Colonic mucosa (tissue), 4 donors: ENCODE measurements at regions of chr17 and their contacts with region 1.

Region 1: DNA sequence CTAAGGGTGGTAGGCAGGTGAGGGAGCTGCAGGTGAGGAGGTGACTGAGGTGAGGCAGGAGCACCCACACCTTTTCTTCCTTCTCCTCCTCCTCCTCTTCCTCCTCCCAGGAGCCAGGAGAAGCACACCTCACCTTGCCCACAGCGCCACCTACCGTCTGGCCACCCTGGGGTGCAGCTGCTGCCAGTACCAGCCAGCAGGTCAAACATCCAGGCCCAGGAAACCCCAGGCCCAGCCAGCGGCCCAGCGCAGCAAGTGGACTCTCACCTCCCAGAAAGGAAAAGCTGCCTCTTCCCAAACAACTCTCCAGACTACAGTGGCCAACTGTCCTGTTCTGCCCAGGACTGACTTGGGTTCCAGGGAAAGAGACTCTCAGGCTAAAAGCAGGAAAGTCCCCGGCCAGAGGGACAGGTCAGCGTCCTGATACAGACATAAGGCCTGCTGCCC is 22.7 kb downstream of the PEMT start:
- DNase-seq: peak; percentile 90
- H3K4me3 ChIP-seq: no peak overlapping the region
- H3K27ac ChIP-seq: no peak overlapping the region
- H3K4me1 ChIP-seq: peaks cover 11% of the 10 kb centered on the region
- H3K27me3 ChIP-seq: no peaks in the 10 kb centered on the region
- CTCF ChIP-seq: peak; percentile 68

Region 2: DNA sequence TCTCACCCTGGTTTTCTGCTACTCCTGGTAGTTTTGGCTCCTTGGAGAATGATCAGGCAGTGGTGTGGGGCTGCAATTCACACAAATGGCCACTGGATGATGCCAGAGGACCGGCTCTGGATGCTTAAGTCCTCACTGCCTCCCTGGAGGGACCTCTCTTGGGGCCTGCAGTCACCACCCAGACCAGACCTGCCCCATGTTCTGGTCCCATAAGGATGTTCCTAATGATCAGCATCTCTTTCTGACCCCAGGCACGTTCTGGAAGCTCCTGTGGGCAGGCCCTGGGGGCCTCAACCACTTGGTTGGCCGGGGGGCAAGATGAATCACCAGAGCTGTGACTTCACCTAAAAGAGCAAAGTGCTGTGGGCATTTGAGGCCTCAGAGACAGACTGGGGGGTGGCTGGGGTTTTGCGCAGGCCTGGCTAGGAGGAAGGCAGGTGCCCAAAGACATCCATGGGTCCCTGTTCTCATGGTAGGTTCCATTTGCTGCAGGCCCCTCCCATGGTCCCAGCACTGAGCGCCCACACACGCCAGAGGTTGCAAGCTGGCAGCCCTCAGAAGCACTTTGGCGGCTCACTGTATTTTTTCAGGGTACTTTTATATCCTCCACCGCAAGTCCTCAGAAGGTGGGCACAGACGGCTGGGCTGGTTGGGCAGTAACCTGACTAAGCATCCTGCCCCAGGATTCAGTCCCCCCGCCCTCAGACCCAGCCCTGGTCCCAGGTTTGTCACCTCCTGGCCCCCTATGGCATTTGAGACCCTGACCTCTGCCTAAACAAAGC is 212.4 kb before region 1 on chr17:
- intact Hi-C with region 1: loop called (anchors 2 kb)
- DNase-seq: peak; percentile 76
- H3K4me3 ChIP-seq: no peak overlapping the region
- H3K27ac ChIP-seq: no peak overlapping the region
- H3K4me1 ChIP-seq: no peaks in the 10 kb centered on the region
- H3K27me3 ChIP-seq: no peaks in the 10 kb centered on the region
- CTCF ChIP-seq: peak; percentile 99

Region 3: DNA sequence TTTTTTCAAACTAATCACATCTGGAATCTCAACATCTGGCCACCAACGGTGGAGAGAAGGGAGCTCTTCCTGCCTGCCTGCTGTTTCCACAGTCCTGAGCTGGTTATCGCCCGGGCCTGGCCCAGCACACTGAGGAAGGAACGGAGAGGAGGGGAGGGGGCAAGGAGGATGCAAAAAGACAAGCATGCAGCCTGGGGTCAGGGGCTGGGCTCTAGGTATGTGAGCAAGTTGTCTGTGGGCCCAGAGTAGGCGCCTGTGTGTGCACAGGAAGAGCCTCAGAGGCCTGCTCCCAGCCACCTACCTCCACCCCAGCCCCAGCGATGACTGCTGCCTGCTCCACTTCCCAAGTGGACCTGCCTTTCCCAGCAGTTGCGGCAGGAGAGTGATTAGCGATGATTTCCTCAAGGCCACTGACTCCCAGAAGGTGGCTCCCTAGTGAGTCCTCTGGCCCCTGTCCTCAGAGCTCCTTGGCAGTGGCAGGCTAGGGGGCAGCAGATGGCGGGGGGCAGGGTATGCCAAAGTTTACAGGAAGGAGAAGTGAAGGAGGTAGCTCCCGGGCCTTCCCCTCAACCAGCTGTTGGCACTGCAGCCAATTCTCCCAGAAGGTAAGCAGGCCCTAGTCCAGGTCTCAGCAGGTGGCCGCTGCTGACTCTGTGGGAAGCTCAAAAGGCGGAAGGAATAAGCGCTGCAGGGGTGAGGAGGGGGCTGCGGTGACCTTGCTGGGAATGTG is 45.6 kb before region 1 on chr17:
- intact Hi-C with region 1: no loop called
- DNase-seq: no peak
- H3K4me3 ChIP-seq: no peak overlapping the region
- H3K27ac ChIP-seq: no peak overlapping the region
- H3K4me1 ChIP-seq: no peaks in the 10 kb centered on the region
- H3K27me3 ChIP-seq: no peaks in the 10 kb centered on the region
- CTCF ChIP-seq: no peak

Region 4: DNA sequence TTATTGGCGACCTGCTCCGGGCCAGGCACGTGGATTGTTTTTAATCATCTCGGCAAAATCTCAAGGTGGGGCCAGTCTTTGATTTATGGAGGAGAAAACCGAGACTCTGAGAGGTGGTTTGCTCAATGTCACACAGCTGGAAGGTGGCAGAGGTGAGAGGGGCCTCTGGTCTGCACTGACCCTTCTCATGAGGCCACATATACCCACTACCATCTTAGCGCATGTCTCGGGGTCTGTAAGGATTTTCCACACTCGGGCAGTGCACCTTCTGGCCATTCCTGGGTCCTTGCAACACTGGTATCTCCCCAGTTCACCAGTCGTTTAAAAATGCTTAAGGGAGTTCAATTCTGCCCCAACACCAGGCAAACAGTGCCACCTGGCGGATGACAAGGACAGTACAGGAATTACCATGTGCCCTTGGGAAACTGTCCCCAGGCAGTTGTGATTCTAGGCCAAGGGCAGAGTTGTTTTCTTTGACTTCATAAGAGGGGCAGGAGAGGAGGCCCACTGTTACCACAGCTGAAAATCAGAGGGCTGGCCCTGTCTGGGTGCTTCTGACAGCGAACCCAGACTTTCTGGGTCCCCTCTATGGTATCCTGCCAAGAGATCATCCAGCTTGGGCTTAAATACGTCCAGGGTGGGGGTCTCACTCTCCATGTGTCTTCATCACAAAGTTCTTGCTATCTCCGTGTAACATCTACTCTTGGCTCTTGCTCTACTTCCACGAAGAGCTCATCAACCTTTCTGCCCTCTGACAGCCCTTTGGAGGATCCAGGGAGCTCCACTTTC is 73.0 kb after region 1 on chr17:
- intact Hi-C with region 1: loop called (anchors 10 kb)
- DNase-seq: peak; percentile 83
- H3K4me3 ChIP-seq: no peak overlapping the region
- H3K27ac ChIP-seq: no peak overlapping the region
- H3K4me1 ChIP-seq: no peaks in the 10 kb centered on the region
- H3K27me3 ChIP-seq: no peaks in the 10 kb centered on the region
- CTCF ChIP-seq: peak; percentile 89